GM12878 (cell line): ENCODE measurements at regions of chr10 and their contacts with region 1.

Region 1: DNA sequence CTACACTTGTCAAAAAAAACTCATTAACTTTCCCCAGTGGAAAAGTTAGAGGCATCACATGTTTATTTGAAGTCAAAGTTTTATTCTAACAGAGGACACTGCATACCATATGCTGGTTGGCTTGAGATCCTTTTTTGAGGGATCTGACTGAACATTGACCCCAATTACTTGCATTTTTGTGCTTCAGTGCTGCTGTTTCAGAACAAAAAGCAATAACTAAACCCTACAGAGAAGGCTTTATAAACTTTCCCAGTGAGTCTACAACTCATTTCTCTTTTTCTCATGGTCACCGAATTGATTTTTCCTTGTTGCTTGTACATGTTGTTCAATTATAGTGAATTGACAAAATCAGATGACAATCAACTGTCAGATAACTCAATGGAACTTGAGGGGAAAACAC is 69.3 kb upstream of the PHYHIPL start:
- DNase-seq: peak; percentile 26
- ATAC-seq: peak; percentile 78
- H3K4me3 ChIP-seq: no peak overlapping the region
- H3K27ac ChIP-seq: no peak overlapping the region
- H3K4me1 ChIP-seq: no peaks in the 10 kb centered on the region
- H3K27me3 ChIP-seq: no peaks in the 10 kb centered on the region
- CTCF ChIP-seq: no peak
- EP300 ChIP-seq: no peak
- POLR2A ChIP-seq: no peak
- RAD21 ChIP-seq: no peak

Region 2: GRCh38 chr10:59073456-59074053 is 33.6 kb before region 1 on chr10:
- CTCF ChIA-PET with region 1: interaction called, 3 read pairs
- POLR2A ChIA-PET with region 1: interaction called, 10 read pairs
- RAD21 ChIA-PET with region 1: interaction called, 30 read pairs
- SMC1A ChIA-PET with region 1: interaction called, 328 read pairs
- in situ Hi-C with region 1: no loop called
- intact Hi-C with region 1: loop called (anchors 2 kb)
- DNase-seq: no peak
- ATAC-seq: peak; percentile 14; the same call in 1 of the 3 replicates
- H3K4me3 ChIP-seq: no peak overlapping the region
- H3K27ac ChIP-seq: no peak overlapping the region
- H3K4me1 ChIP-seq: no peaks in the 10 kb centered on the region
- H3K27me3 ChIP-seq: no peaks in the 10 kb centered on the region
- CTCF ChIP-seq: no peak
- EP300 ChIP-seq: no peak
- POLR2A ChIP-seq: no peak
- RAD21 ChIP-seq: no peak

Region 3: DNA sequence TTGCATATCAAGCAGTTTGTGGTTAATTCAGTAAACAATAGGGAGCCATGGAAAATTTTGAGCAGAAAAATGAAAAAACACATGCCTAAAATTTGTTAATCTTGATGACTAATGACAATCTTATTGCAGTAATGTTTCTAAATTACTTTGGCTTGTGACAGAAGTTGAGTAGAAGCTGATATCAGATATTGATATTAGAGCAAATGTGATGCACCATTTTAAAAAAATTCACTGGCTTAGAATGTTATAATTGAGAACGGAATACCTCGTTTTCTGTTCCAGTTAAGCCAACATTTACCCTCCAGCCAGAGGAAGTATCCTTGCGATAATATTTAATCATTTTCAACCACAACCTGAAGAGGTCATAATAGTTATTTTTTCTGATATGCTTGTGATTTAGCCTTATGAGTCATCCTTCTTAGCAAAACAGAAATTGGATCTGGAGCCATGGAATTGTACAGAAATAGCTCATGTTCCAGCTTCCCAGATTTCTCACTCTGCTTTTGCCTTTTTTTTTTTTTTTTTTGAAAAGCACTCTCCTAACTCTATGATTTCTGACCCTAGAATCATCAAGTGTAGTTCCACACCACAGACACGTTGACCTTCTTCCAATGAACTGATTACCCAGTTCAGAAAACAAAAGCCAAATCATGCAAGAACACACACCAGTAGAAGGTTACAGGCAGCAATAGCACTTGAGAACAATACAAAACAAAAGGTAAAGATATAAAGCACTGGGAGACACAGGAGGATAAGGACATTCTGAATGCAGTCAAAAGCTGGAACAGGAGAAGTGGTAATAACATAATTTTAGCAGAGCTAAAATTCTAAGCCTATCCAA is 27.5 kb before region 1 on chr10:
- CTCF ChIA-PET with region 1: interaction called, 6 read pairs
- POLR2A ChIA-PET with region 1: interaction called, 3 read pairs
- RAD21 ChIA-PET with region 1: interaction called, 30 read pairs
- SMC1A ChIA-PET with region 1: interaction called, 328 read pairs
- in situ Hi-C with region 1: no loop called
- intact Hi-C with region 1: no loop called
- DNase-seq: no peak
- ATAC-seq: no peak
- H3K4me3 ChIP-seq: no peak overlapping the region
- H3K27ac ChIP-seq: no peak overlapping the region
- H3K4me1 ChIP-seq: 0 out of 2 replicates have a peak, but pooled peaks cover 3% of the 10 kb centered on the region
- H3K27me3 ChIP-seq: no peaks in the 10 kb centered on the region
- CTCF ChIP-seq: no peak
- EP300 ChIP-seq: no peak
- POLR2A ChIP-seq: no peak
- RAD21 ChIP-seq: no peak

Region 4: GRCh38 chr10:59090817-59091622 is 16.1 kb before region 1 on chr10:
- CTCF ChIA-PET with region 1: interaction called, 5 read pairs
- POLR2A ChIA-PET with region 1: interaction called, 6 read pairs
- RAD21 ChIA-PET with region 1: interaction called, 12 read pairs
- SMC1A ChIA-PET with region 1: interaction called, 328 read pairs
- in situ Hi-C with region 1: no loop called
- intact Hi-C with region 1: no loop called
- DNase-seq: no peak
- ATAC-seq: no peak; the same call in 1 of the 3 replicates
- H3K4me3 ChIP-seq: no peak overlapping the region
- H3K27ac ChIP-seq: no peak overlapping the region
- H3K4me1 ChIP-seq: no peaks in the 10 kb centered on the region
- H3K27me3 ChIP-seq: no peaks in the 10 kb centered on the region
- CTCF ChIP-seq: no peak
- EP300 ChIP-seq: no peak
- POLR2A ChIP-seq: no peak
- RAD21 ChIP-seq: no peak

Region 5: DNA sequence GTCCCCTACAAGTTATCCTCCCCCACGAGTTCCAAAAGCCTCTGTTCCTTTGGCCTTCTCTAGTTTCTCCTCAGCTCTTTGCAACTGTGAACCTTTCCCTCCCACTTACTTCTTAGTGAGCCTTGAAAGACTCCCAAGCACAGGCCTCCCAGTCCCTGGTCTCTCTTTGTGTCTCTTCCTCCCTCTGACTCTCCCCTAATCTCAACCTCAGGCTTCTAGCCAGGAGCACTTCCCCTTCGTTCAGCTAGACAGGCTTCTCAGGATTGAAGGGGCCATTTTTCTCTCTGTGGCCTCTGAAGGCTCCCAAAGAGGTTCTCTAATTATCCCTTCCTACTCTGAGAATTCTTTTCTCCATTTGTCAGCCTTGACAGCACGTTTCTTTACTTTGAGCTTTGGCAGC is 19.1 kb after region 1 on chr10:
- CTCF ChIA-PET with region 1: interaction called, 4 read pairs
- POLR2A ChIA-PET with region 1: interaction called, 4 read pairs
- RAD21 ChIA-PET with region 1: interaction called, 6 read pairs
- SMC1A ChIA-PET with region 1: interaction called, 57 read pairs
- in situ Hi-C with region 1: no loop called
- intact Hi-C with region 1: no loop called
- DNase-seq: no peak
- ATAC-seq: peak; percentile 53
- H3K4me3 ChIP-seq: no peak overlapping the region
- H3K27ac ChIP-seq: no peak overlapping the region
- H3K4me1 ChIP-seq: no peaks in the 10 kb centered on the region; the same call in 1 of the 2 replicates
- H3K27me3 ChIP-seq: no peaks in the 10 kb centered on the region
- CTCF ChIP-seq: no peak
- EP300 ChIP-seq: no peak
- POLR2A ChIP-seq: no peak
- RAD21 ChIP-seq: no peak

Region 6: GRCh38 chr10:59181668-59182067 is 74.5 kb after region 1 on chr10:
- CTCF ChIA-PET with region 1: interaction called, 3 read pairs
- POLR2A ChIA-PET with region 1: no interaction called
- RAD21 ChIA-PET with region 1: interaction called, 4 read pairs
- SMC1A ChIA-PET with region 1: interaction called, 6 read pairs
- in situ Hi-C with region 1: no loop called
- intact Hi-C with region 1: loop called (anchors 5 kb)
- DNase-seq: peak; percentile 17
- ATAC-seq: peak; percentile 90
- H3K4me3 ChIP-seq: no peak overlapping the region
- H3K27ac ChIP-seq: no peak overlapping the region
- H3K4me1 ChIP-seq: no peaks in the 10 kb centered on the region
- H3K27me3 ChIP-seq: peaks cover 0 to 4% of the 10 kb centered on the region in 2 experiments; a peak in 1 of 4 replicates
- CTCF ChIP-seq: peak; percentile 37 to 67 (median 55); a peak in 5 of 6 replicates
- EP300 ChIP-seq: no peak
- POLR2A ChIP-seq: no peak
- RAD21 ChIP-seq: peak; percentile 80

Region 7: GRCh38 chr10:60212195-60212594 is 1105.0 kb after region 1 on chr10:
- CTCF ChIA-PET with region 1: no interaction called
- POLR2A ChIA-PET with region 1: no interaction called
- RAD21 ChIA-PET with region 1: no interaction called
- SMC1A ChIA-PET with region 1: no interaction called
- in situ Hi-C with region 1: no loop called
- intact Hi-C with region 1: no loop called
- DNase-seq: no peak
- ATAC-seq: no peak
- H3K4me3 ChIP-seq: no peak overlapping the region
- H3K27ac ChIP-seq: no peak overlapping the region
- H3K4me1 ChIP-seq: no peaks in the 10 kb centered on the region
- H3K27me3 ChIP-seq: peaks cover 0 to 3% of the 10 kb centered on the region in 2 experiments; a peak in 1 of 4 replicates
- CTCF ChIP-seq: no peak
- EP300 ChIP-seq: no peak
- POLR2A ChIP-seq: no peak
- RAD21 ChIP-seq: no peak